HepG2 (cell line): ENCODE measurements at regions of chr2 and their contacts with region 1.

Region 1: GRCh38 chr2:74833418-74834233 is at the start of gene HK2:
- DNase-seq: peak; percentile 85
- ATAC-seq: peak; percentile 90
- H3K4me3 ChIP-seq: peak within 1 kb of the TSS; percentile 87 to 99 (median 97)
- H3K27ac ChIP-seq: peak within 1 kb of the TSS; percentile 71
- H3K4me1 ChIP-seq: peaks cover 60% of the 10 kb centered on the region
- H3K27me3 ChIP-seq: peaks cover 0 to under 1% of the 10 kb centered on the region in 2 experiments; a peak in 1 of 5 replicates
- CTCF ChIP-seq: no peak
- EP300 ChIP-seq: no peak
- POLR2A ChIP-seq: peak; percentile 66 to 82
- RAD21 ChIP-seq: no peak
- total RNA-seq, gene HK2: 13.2 and 24.4 TPM in 2 replicates

Region 2: DNA sequence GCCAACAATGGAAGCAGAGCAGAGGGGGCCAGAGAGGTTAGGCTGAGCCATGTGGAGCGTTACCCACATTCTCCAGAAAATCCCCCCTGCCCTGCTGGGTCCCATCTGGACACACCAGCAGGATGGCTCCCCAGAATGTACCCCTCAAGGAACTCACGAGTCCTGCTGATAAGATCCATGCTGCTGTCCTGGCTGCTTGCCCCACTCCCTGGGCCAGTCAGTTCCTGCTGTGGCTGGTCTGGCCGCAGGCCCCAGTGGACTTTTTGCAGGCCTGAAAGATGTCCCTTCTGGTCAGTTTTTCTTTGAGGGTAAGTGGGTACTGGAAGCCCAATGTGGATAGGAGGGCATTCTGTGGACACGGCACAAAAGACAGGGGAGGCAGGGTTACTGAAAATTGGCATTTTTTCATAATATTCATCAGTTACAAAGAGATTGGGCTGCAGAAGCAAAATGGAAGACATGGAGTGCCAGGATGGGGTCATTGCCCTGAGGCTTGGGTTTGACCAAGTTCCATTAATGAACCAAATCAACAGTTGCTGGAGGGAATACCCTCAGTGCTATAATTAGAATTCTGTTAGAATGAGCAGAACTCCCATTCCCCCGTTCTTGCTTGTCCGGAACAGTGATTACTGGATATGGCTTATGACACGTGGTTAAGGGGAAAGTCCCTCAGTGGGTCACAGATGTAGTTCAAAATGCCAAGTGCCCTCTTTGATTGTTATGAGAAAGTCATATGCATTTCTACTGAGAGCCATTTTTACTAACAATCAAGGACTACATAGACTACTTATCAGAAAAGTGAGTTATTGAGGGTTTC is 529.1 kb before region 1 on chr2:
- CTCF ChIA-PET with region 1: no interaction called
- POLR2A ChIA-PET with region 1: no interaction called
- in situ Hi-C with region 1: no loop called
- intact Hi-C with region 1: no loop called
- DNase-seq: no peak
- ATAC-seq: no peak
- H3K4me3 ChIP-seq: no peak overlapping the region
- H3K27ac ChIP-seq: no peak overlapping the region
- H3K4me1 ChIP-seq: no peaks in the 10 kb centered on the region
- H3K27me3 ChIP-seq: no peaks in the 10 kb centered on the region
- CTCF ChIP-seq: no peak
- EP300 ChIP-seq: no peak
- POLR2A ChIP-seq: no peak
- RAD21 ChIP-seq: no peak

Region 3: DNA sequence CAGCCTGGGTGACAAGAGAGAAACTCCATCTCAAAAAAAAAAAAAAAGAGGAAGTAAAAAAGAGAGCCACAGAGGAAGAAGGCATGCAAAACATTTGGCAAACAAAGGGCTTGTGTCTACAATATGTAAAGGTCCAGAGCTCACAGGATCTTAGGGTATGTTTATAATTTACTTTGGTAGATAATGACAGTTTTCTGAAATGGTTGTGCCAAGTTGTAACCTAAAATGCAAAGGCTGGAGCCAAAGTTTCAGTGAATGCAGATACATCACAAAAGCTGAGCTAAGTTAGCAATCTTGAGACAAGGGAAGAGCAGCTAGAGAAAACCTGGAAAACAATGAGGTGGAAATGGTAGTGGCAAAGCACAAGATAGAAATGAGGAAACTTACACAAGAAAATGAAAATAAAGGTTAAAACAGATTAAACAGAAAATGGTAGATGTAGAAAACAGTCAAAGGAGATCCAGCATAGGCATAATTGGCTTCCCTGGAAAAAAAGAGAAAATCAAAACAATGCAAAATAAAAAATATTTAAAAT is 77.2 kb before region 1 on chr2:
- CTCF ChIA-PET with region 1: no interaction called
- POLR2A ChIA-PET with region 1: interaction called, 10 read pairs
- in situ Hi-C with region 1: loop called (anchors 5 kb)
- intact Hi-C with region 1: no loop called
- DNase-seq: peak; percentile 93
- ATAC-seq: peak; percentile 78
- H3K4me3 ChIP-seq: no peak overlapping the region
- H3K27ac ChIP-seq: peak overlapping the region; percentile 82
- H3K4me1 ChIP-seq: peaks cover 78% of the 10 kb centered on the region
- H3K27me3 ChIP-seq: no peaks in the 10 kb centered on the region
- CTCF ChIP-seq: no peak
- EP300 ChIP-seq: peak in 1 of 2 experiments; percentile 85; a peak in 2 of 4 replicates
- POLR2A ChIP-seq: no peak
- RAD21 ChIP-seq: no peak

Region 4: GRCh38 chr2:74816540-74817303 is 16.9 kb before region 1 on chr2:
- CTCF ChIA-PET with region 1: no interaction called
- POLR2A ChIA-PET with region 1: interaction called, 30 read pairs
- in situ Hi-C with region 1: no loop called
- intact Hi-C with region 1: no loop called
- DNase-seq: peak; percentile 92
- ATAC-seq: peak; percentile 96
- H3K4me3 ChIP-seq: peak overlapping the region; percentile 25 to 61 (median 43)
- H3K27ac ChIP-seq: peak overlapping the region; percentile 63
- H3K4me1 ChIP-seq: peaks cover 84% of the 10 kb centered on the region
- H3K27me3 ChIP-seq: 0 out of 5 replicates have a peak, but pooled peaks cover 0 to 4% of the 10 kb centered on the region in 2 experiments
- CTCF ChIP-seq: no peak
- EP300 ChIP-seq: peak in 1 of 2 experiments; percentile 76; a peak in 2 of 4 replicates
- POLR2A ChIP-seq: no peak; a peak in 1 of 4 replicates
- RAD21 ChIP-seq: 0 out of 2 replicates have a peak, but pooled peaks have one; percentile 27

Region 5: GRCh38 chr2:74856004-74856578 is 22.5 kb after region 1 on chr2:
- CTCF ChIA-PET with region 1: no interaction called
- POLR2A ChIA-PET with region 1: interaction called, 6 read pairs
- in situ Hi-C with region 1: no loop called
- intact Hi-C with region 1: loop called (anchors 2 kb)
- DNase-seq: peak; percentile 90
- ATAC-seq: peak; percentile 86
- H3K4me3 ChIP-seq: 0 out of 6 replicates have a peak overlapping the region, but pooled peaks of 1 of the 3 experiments have one; percentile 2
- H3K27ac ChIP-seq: peak overlapping the region; percentile 21
- H3K4me1 ChIP-seq: peaks cover 67% of the 10 kb centered on the region
- H3K27me3 ChIP-seq: no peaks in the 10 kb centered on the region
- CTCF ChIP-seq: 0 out of 2 replicates have a peak, but pooled peaks have one; percentile 10
- EP300 ChIP-seq: peak in 1 of 2 experiments; percentile 93; a peak in 2 of 4 replicates
- POLR2A ChIP-seq: no peak
- RAD21 ChIP-seq: no peak